ENCODE measurements at regions of chr6 and their contacts with region 1.

Region 1: DNA sequence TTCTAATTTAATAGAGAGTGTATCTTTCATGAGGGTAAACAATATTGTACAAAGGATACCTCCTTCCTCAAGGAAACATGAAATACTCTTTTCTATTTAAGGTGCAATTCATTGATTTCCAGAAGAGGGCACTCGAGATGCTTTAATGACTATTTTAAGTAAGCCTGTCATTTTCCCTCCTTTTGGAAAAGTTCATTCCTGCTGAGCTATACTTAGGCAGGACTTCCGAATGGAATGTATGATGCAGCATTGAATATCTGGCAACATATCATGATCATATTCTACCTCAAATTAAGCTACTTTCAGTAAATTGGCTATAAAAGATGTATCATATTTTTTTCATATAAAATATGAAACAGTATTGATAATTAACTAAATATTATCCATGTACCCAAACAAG is 5.0 kb downstream of the DST start:
- DNase-seq: no peak
- ATAC-seq: peak; percentile 44 to 72 (median 60)
- H3K4me3 ChIP-seq: no peak overlapping the region
- H3K27ac ChIP-seq: peak overlapping the region in 3 of 12 donors; percentile 6 to 30 (median 8)
- H3K4me1 ChIP-seq: peaks cover 0 to 12% (median 1%) of the 10 kb centered on the region in 12 donors
- H3K27me3 ChIP-seq: no peaks in the 10 kb centered on the region
- CTCF ChIP-seq: peak; percentile 49 to 87 (median 72)
- POLR2A ChIP-seq: no peak

Region 2: GRCh38 chr6:56693246-56693607 is 55.6 kb after region 1 on chr6:
- intact Hi-C with region 1: loop called in 8 of 10 experiments (anchors 2 to 5 kb)
- DNase-seq: peak; percentile 84 to 95 (median 88)
- ATAC-seq: peak; percentile 85 to 87 (median 86)
- H3K4me3 ChIP-seq: peak overlapping the region in 11 of 12 donors; percentile 23 to 65 (median 51)
- H3K27ac ChIP-seq: peak overlapping the region; percentile 78 to 90 (median 86)
- H3K4me1 ChIP-seq: peaks cover 0 to 43% (median 22%) of the 10 kb centered on the region in 12 donors
- H3K27me3 ChIP-seq: no peaks in the 10 kb centered on the region
- CTCF ChIP-seq: no peak
- POLR2A ChIP-seq: peak in 1 of 2 donors; percentile 33

Region 3: GRCh38 chr6:56699066-56699654 is 61.5 kb after region 1 on chr6:
- intact Hi-C with region 1: loop called (anchors 1 to 5 kb)
- DNase-seq: no peak
- ATAC-seq: peak in 3 of 4 donors; percentile 38 to 62 (median 59)
- H3K4me3 ChIP-seq: no peak overlapping the region
- H3K27ac ChIP-seq: no peak overlapping the region
- H3K4me1 ChIP-seq: peaks cover 0 to 11% (median 5%) of the 10 kb centered on the region in 12 donors
- H3K27me3 ChIP-seq: no peaks in the 10 kb centered on the region
- CTCF ChIP-seq: peak; percentile 41 to 71 (median 60)
- POLR2A ChIP-seq: no peak

Region 4: DNA sequence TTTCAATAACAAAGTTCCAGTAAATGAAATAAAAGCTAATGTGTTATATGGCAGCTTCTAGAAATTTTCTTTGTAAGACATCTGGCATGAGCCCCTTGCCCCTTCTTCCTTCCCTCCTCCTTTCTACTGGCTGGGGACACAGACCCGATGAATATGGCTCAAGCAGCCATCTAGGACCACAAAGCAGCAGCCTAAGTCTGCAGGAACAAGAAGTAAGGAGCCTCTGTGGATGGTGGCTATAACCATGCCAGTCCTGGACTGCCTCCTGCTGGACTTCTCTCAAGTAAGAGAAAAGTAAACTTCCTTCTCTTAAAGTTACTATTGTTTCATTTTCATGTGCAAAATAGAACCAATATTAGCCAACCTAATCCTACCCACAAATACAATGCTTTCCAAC is 119.9 kb after region 1 on chr6:
- intact Hi-C with region 1: loop called in 4 of 10 experiments (anchors 5 kb)
- DNase-seq: no peak
- ATAC-seq: peak; percentile 37 to 63 (median 50)
- H3K4me3 ChIP-seq: no peak overlapping the region
- H3K27ac ChIP-seq: peak overlapping the region in 2 of 12 donors; percentile 24 to 55
- H3K4me1 ChIP-seq: peaks cover 0 to 63% (median 51%) of the 10 kb centered on the region in 12 donors
- H3K27me3 ChIP-seq: no peaks in the 10 kb centered on the region
- CTCF ChIP-seq: peak in 10 of 12 donors; percentile 30 to 54 (median 40)
- POLR2A ChIP-seq: no peak

Measured in heart left ventricle (tissue), 16 donors.